Activated B cell treated with CpG ODN at 0.5 μM for 24 hours (primary cell): ENCODE measurements at regions of chr7 and their contacts with region 1.

Region 1: GRCh38 chr7:38215735-38216670 is 38.0 kb downstream of the STARD3NL start:
- DNase-seq: peak; percentile 40
- ATAC-seq: peak; percentile 97
- H3K4me3 Mint-ChIP-seq: no peak overlapping the region
- H3K27ac Mint-ChIP-seq: no peak overlapping the region
- H3K4me1 Mint-ChIP-seq: peaks cover 7% of the 10 kb centered on the region
- H3K27me3 Mint-ChIP-seq: no peaks in the 10 kb centered on the region
- CTCF ChIP-seq: peak; percentile 75

Region 2: DNA sequence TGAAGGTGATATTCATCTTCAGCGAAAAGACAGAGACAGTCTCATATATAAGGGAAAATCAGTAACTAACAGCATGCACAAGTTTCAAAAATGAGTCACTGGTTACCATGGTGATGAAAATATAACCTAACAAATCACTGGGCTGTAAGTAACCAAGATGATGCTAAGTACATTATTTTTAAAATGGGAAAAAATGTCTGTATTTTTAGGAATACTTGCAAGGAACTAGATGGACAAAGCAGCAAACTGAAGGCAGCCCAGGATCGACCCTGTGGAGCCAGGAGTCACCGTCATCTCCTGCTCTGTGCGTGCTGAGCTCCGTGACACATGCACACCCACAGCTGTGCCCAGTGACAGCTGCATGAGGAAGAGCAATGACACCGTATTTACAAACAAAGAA is 904.6 kb before region 1 on chr7:
- CTCF ChIA-PET with region 1: no interaction called
- POLR2A ChIA-PET with region 1: no interaction called
- intact Hi-C with region 1: no loop called
- DNase-seq: no peak
- ATAC-seq: peak; percentile 74
- H3K4me3 Mint-ChIP-seq: no peak overlapping the region
- H3K27ac Mint-ChIP-seq: peak overlapping the region; percentile 77
- H3K4me1 Mint-ChIP-seq: peaks cover 73% of the 10 kb centered on the region
- H3K27me3 Mint-ChIP-seq: no peaks in the 10 kb centered on the region
- CTCF ChIP-seq: no peak

Region 3: DNA sequence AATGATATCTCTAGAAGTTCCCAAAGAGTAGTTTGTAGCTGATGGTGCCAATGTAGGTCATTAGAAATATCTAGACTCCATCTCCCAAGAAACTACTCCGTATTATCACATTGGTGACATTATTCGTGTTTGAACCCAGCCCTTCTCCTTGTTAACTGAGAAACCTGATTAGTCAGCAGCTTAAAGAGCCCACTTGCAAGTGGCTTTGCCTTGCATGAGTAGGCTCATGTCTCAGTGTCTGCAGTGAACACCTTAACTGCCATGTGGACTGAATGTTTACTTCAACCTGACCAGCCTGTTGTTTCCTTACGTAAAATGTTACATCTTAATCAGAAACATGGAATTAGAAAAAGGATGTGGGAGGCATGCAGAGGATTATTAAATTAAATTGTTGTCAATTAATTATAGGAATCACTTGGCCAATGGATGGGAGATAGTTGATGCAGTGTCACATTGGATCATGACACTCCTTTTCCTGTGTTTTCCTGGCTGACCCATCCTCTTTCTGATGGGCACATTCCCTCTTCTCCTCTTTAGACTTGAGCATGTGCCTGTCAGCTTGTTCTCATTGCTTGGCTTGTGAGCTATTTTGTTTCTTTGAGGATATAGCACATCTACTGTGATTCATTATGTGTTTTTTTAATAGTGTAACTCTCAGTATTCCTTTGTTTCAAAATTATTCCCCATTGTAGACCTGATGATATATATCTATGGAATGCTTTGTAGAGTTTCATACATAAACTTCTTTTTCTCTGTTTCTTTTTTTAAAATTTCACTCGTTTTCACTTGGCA is 20.0 kb before region 1 on chr7:
- CTCF ChIA-PET with region 1: interaction called, 30 read pairs
- POLR2A ChIA-PET with region 1: no interaction called
- intact Hi-C with region 1: no loop called
- DNase-seq: no peak
- ATAC-seq: no peak
- H3K4me3 Mint-ChIP-seq: no peak overlapping the region
- H3K27ac Mint-ChIP-seq: no peak overlapping the region
- H3K4me1 Mint-ChIP-seq: peaks cover 28% of the 10 kb centered on the region
- H3K27me3 Mint-ChIP-seq: no peaks in the 10 kb centered on the region
- CTCF ChIP-seq: no peak

Region 4: DNA sequence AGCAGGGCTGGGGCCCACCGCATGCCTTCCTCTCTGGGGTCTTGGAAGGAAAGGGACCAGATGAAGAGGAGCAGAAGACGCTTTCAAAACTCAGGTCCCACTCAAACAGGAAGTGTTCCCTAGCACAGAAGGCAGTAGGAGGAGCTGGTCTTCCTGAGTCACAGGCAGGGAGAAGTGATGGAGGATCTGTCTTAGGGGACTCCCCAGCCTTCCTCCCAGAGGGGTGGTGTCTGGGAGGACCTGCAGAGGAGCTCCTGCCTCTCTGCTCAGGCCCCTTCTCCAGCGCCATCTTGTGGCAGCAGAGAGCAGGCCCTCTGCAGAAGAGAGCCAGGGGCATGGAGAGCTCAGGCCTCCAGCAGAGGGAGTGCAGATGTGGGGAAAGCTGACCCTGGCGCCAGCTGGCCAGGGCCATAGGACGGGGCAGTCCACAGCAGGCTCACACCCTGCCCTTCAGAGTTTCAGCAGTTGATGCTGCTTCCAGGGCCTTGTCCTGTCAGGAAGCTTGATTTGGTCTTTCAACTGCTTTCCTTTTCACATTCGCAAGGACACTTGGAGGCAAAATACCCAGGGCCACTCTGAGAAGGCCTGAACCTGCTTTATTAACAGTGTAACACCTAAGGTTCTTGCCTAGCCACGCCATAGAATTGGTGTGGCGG is 119.6 kb after region 1 on chr7:
- CTCF ChIA-PET with region 1: interaction called, 23 read pairs
- POLR2A ChIA-PET with region 1: no interaction called
- intact Hi-C with region 1: loop called (anchors 10 kb)
- DNase-seq: peak; percentile 67
- ATAC-seq: peak; percentile 99
- H3K4me3 Mint-ChIP-seq: peak overlapping the region; percentile 28
- H3K27ac Mint-ChIP-seq: peak overlapping the region; percentile 30
- H3K4me1 Mint-ChIP-seq: peaks cover 15% of the 10 kb centered on the region
- H3K27me3 Mint-ChIP-seq: no peaks in the 10 kb centered on the region
- CTCF ChIP-seq: peak; percentile 45

Region 5: DNA sequence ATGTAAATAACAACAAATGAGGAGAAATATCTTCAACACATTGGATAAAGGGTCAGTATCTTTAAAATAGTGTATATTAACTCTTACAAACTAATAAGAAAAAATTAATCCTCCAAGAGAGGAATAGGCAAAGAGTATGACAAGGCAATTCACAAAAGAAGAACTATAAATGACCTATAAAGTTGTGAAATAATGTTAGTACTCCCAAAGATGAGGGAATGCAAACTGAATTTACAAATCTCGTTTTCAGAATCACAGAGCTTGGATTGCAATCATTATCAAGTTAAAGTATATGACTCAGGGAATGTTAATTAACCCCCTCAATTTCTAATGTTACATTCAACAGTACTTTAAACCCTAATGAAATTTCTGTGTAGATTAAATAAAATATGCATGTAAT is 144.8 kb after region 1 on chr7:
- CTCF ChIA-PET with region 1: interaction called, 11 read pairs
- POLR2A ChIA-PET with region 1: no interaction called
- intact Hi-C with region 1: no loop called
- DNase-seq: no peak
- ATAC-seq: no peak
- H3K4me3 Mint-ChIP-seq: no peak overlapping the region
- H3K27ac Mint-ChIP-seq: no peak overlapping the region
- H3K4me1 Mint-ChIP-seq: peaks cover 49% of the 10 kb centered on the region
- H3K27me3 Mint-ChIP-seq: no peaks in the 10 kb centered on the region
- CTCF ChIP-seq: no peak